ENCODE measurements at regions of chr5 and their contacts with region 1.

Region 1: DNA sequence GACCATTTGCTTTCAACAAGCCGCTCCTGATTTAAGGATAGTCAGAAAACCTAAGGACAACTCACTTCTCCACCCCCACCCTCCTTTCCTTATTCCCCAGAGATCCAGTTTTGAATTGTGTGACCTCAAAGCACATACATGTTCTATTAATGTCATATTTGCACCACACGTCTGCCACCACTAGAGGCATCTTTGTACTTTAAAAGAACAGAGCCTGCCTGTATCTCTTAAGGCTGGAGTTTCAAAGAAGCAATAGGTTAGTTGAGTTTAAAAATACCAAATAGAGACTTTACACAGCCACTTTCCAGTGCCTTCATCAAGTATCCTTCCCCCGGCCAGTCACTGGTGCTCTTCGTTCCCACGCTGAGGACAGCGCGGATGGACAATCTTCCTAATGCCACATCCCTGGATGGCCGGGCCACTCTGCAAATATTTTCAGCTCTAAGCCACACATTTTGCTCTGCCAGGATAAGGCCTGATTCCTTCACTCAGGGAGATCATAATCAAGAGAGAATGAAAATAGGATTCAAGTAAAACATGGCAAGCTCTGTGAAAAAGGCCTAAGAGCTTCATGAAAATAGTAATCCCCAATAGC is 146.3 kb downstream of the SNCAIP start:
- DNase-seq: no peak
- H3K4me3 ChIP-seq: no peak overlapping the region
- H3K27ac ChIP-seq: no peak overlapping the region
- H3K4me1 ChIP-seq: no peaks in the 10 kb centered on the region; a peak in 1 of 7 replicates
- H3K27me3 ChIP-seq: no peaks in the 10 kb centered on the region
- CTCF ChIP-seq: peak in 2 of 3 experiments; percentile 35 to 60; a peak in 2 of 4 replicates
- EP300 ChIP-seq: no peak
- POLR2A ChIP-seq: no peak
- RAD21 ChIP-seq: peak; percentile 49 to 66

Region 2: DNA sequence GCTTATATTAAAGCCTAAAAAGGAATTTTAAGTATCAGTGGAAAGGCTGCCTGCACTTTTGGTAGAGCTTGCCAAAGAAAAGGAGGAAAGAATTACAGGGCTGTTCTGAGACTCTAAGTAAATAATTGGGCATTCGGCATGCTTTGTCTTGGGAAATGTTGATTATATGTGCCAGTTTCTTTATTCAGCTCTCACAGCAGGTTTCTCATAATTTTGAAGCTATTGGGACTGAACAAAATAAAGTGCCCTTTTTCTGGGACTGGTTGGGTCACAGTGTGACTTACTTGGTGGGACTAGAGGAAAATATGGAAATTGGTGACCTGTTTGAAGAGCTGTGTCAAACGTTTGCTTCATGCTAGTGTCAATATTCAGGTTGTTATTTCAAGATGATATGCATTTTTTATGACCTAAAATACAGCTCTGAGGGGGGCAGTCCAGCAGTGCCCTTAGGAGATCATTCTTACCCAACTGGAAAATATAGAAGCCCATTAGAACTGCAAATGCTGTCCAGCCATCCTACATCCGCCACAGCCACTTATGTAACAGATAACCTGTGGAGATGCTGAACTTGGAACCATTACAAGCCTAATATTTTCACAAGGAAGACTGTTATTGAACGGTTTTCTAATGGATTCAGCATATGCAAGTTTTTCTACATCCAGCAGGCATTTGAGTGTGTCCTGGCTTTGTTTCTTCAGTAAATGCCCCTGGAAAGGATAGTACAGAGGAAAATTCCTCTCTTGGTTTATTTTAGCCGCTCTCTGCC is 24.0 kb before region 1 on chr5:
- CTCF ChIA-PET with region 1: no interaction called
- POLR2A ChIA-PET with region 1: no interaction called
- DNase-seq: no peak
- H3K4me3 ChIP-seq: no peak overlapping the region; a peak in 1 of 8 replicates
- H3K27ac ChIP-seq: no peak overlapping the region
- H3K4me1 ChIP-seq: peaks cover 0 to 9% (median 4%) of the 10 kb centered on the region in 4 experiments; a peak in 4 of 7 replicates
- H3K27me3 ChIP-seq: no peaks in the 10 kb centered on the region
- CTCF ChIP-seq: no peak
- EP300 ChIP-seq: no peak
- POLR2A ChIP-seq: no peak
- RAD21 ChIP-seq: no peak

Region 3: DNA sequence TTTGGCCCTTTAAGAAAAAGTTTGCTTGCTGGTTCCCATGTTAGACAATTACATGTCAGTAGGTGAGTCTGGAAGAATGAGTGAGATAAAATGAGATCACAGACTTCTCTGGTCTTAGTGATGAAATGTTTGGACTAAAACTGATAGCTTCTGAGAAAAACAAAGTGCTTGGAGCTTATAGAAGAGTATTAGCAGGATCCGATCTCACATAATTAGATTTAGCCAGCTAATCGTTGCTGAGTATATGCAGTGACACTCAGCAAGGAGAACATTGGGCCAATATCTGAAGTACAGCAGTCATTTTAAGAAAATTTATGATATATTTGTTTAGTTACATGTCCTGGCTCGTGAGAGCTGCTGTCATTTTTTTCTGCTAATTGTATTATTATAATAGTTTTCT is 10.5 kb before region 1 on chr5:
- CTCF ChIA-PET with region 1: interaction called, 20 read pairs
- POLR2A ChIA-PET with region 1: interaction called, 5 read pairs
- DNase-seq: no peak
- H3K4me3 ChIP-seq: no peak overlapping the region
- H3K27ac ChIP-seq: no peak overlapping the region
- H3K4me1 ChIP-seq: no peaks in the 10 kb centered on the region
- H3K27me3 ChIP-seq: no peaks in the 10 kb centered on the region
- CTCF ChIP-seq: no peak
- EP300 ChIP-seq: no peak
- POLR2A ChIP-seq: no peak
- RAD21 ChIP-seq: no peak

Region 4: DNA sequence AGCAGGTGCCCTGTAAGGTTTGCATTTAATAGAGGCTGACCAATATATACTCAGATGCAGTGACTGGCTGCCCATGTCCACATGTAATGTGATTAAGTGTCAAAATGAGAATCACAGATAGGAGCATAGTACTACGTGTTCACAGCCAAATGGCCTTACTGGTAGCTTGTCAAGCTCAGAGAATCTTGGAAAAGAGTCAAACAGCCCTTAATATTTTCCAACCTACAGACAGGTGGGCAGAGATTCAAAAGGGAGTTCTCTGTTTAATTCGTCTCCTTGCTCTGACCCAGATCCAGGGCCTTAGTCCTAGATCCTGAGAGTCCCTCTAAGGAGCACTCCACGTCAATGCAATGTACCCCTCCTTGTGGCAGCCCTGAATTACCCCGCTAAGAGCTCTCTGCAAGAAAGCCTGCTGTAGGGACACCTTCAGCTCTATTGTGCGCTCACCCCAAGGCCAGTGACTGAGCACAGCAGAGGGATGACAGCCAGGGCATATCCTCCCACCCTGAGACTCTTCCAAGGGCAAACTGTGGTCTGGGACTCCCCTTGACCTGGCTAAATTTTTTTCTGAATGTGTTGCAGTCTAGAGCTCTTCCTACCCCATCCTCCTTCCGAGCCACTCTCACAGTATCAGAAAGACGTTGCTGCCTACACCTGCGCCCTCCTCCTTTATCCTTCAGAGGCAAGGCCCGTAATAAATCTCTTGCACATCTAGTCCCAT is 12.8 kb after region 1 on chr5:
- CTCF ChIA-PET with region 1: interaction called, 25 read pairs
- POLR2A ChIA-PET with region 1: interaction called, 4 read pairs
- DNase-seq: no peak
- H3K4me3 ChIP-seq: no peak overlapping the region
- H3K27ac ChIP-seq: no peak overlapping the region
- H3K4me1 ChIP-seq: peaks cover 4 to 20% (median 14%) of the 10 kb centered on the region in 4 experiments
- H3K27me3 ChIP-seq: no peaks in the 10 kb centered on the region
- CTCF ChIP-seq: peak; percentile 1 to 24 (median 12); a peak in 3 of 4 replicates
- EP300 ChIP-seq: no peak
- POLR2A ChIP-seq: no peak
- RAD21 ChIP-seq: peak; percentile 21 to 44; a peak in 3 of 4 replicates

Region 5: DNA sequence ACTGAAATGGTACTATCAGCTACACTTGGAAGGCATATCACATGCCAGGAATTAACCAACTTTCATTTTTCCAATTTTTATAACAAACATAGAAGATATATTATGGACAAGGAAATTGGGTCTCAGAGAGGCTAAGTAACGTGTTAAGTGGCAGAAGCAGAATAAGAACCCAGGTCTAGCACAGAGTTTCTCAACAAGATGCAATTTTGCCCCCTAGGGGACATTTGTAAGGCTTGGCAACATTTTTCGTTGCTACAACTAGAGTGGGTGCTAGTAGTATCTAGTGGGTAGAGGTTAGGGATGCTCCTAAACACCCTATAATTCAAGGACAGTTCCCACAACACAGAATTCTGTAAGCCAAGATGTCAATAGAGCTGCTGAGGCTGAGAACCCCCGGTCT is 34.3 kb after region 1 on chr5:
- CTCF ChIA-PET with region 1: interaction called, 20 read pairs
- POLR2A ChIA-PET with region 1: no interaction called
- DNase-seq: no peak
- H3K4me3 ChIP-seq: no peak overlapping the region
- H3K27ac ChIP-seq: no peak overlapping the region
- H3K4me1 ChIP-seq: peaks cover 0 to 4% (median under 1%) of the 10 kb centered on the region in 4 experiments; a peak in 2 of 7 replicates
- H3K27me3 ChIP-seq: no peaks in the 10 kb centered on the region
- CTCF ChIP-seq: peak in 2 of 3 experiments; percentile 57 to 67; a peak in 3 of 4 replicates
- EP300 ChIP-seq: no peak
- POLR2A ChIP-seq: no peak
- RAD21 ChIP-seq: peak; percentile 75 to 83

Region 6: DNA sequence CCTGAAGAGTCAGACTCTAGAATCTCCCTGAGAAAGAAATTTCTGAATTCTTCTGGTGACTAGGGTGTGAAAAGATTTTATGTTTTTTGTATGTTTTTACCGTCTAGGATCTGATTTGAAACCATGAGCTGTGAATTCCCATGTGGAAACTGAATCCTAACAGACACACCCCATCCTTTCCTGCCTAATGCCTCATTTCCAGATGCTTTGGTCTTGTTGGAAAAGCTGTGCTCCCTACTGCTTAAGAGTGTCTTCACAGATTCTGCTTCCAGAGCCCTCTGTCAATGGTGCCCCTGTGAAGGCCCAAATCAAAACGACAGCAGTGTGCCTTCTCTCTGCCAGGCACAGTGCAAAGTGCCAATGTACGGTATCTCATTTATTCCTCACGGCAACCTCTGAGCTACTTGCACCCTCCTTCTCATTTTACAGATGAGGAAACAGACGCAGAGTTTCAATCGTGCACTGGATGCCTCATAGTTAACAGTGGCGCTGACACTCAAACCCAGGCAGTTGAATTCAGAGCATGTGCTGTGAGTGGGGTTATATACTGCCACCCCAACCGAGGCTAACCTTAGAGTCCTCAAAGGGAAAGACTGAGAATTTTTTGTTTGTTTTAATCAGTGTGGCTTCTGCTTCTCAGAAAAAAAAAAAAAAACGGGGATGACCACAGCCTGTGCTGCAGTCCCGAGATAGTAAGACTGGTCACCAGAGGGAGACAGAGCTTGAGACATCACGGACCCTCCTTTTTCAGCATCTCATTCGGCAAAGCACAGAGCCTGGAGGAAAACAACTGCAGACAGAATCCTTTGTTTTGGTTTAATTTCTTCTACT is 42.1 kb after region 1 on chr5:
- CTCF ChIA-PET with region 1: interaction called, 20 read pairs
- POLR2A ChIA-PET with region 1: no interaction called
- DNase-seq: peak; percentile 31 to 54
- H3K4me3 ChIP-seq: no peak overlapping the region
- H3K27ac ChIP-seq: no peak overlapping the region
- H3K4me1 ChIP-seq: peaks cover 0 to 9% (median 4%) of the 10 kb centered on the region in 4 experiments; a peak in 3 of 7 replicates
- H3K27me3 ChIP-seq: no peaks in the 10 kb centered on the region
- CTCF ChIP-seq: peak; percentile 72 to 82 (median 74)
- EP300 ChIP-seq: no peak
- POLR2A ChIP-seq: no peak
- RAD21 ChIP-seq: peak; percentile 94

Region 7: DNA sequence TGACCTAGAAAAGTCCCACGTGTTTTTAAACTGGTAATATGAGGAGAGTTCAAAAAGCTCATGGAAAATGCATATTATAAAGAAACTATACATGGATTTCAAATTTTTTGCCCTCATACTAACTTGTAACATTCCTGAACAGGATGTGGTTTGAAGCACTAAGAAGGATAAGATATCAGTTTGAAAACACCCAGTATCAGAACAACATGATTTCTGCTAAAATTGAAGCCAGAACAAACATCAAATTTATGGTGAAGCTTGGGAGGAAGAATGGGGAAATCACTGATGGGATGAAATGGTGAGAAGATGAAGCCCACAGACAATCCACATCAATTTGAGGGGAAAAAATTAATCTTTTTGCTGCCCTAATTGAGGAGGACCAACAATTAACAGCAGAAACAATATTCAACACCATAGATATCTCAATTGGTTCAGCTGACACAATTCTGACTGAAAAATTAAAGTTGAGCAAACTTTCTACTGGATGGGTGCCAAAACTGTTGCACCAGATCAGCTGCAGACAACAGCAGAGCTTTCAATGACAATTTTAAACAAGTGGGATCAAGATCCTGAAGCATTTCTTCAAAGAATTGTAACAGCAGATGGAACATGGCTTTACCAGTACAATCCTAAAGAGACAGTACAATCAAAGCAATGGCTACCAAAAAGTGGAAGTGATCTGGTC is 203.3 kb after region 1 on chr5:
- CTCF ChIA-PET with region 1: no interaction called
- POLR2A ChIA-PET with region 1: no interaction called
- DNase-seq: no peak
- H3K4me3 ChIP-seq: no peak overlapping the region
- H3K27ac ChIP-seq: no peak overlapping the region
- H3K4me1 ChIP-seq: no peaks in the 10 kb centered on the region
- H3K27me3 ChIP-seq: no peaks in the 10 kb centered on the region
- CTCF ChIP-seq: no peak
- EP300 ChIP-seq: no peak
- POLR2A ChIP-seq: no peak
- RAD21 ChIP-seq: no peak

Measured in H1 (cell line).